Ascending aorta (tissue), 2 donors: ENCODE measurements at regions of chr15 and their contacts with region 1.

Region 1: DNA sequence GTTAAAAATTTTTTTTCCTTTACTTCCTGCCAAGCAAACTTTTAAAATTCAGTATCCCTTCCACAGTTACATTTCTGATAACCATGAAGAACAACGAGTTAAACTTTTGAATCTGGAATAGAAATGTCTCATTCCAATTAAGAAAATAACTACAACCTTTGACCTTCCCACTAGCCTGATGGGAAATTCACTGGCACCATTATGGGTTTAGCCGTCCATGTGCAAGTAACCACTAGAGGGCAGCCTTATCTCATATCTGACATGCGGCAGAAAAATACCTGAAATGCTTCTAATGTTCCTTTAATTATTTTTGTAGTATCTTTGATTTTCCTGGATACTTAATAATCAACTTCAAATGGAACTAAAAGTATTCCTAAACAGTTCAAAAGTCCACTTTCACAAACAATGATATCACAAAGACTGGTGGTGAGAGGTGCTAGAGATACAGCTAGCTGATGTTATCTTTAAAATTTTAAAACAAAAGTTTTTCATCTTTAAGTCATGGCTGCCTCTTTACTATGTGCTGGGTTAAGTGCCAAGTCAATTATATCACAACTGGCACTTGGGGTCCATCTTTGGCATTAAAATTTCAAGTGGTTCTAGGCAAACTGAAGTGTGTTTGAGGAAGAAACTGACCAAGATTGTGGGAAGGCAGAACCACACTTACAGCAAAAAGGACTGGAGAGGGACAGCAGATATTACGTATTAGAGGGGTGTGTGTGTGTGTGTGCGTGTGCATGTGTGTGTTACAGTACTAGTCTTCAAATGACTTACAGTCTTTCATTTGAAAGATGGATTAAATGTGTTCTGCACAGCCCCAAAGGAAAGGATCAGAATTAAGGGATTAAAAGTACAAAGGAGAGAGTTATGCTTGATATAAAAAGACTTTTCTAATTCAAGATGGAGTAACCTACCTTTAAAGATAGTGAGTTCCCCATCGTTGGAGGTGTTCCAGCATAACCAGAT is 107.1 kb upstream of the ICE2 start:
- DNase-seq: peak in 1 of 2 donors; percentile 79
- H3K4me3 ChIP-seq: no peak overlapping the region
- H3K27ac ChIP-seq: no peak overlapping the region
- H3K4me1 ChIP-seq: peaks cover 0 to 5% of the 10 kb centered on the region in 2 donors
- H3K27me3 ChIP-seq: no peaks in the 10 kb centered on the region
- CTCF ChIP-seq: peak; percentile 79 to 88 (median 85)

Region 2: GRCh38 chr15:60916679-60917460 is 330.8 kb after region 1 on chr15:
- intact Hi-C with region 1: loop called (anchors 1 kb)
- DNase-seq: peak; percentile 40 to 91
- H3K4me3 ChIP-seq: peak overlapping the region; percentile 25 to 56
- H3K27ac ChIP-seq: peak overlapping the region; percentile 72 to 87
- H3K4me1 ChIP-seq: peaks cover 0 to 16% of the 10 kb centered on the region in 2 donors
- H3K27me3 ChIP-seq: no peaks in the 10 kb centered on the region
- CTCF ChIP-seq: peak; percentile 76 to 84 (median 78)

Region 3: DNA sequence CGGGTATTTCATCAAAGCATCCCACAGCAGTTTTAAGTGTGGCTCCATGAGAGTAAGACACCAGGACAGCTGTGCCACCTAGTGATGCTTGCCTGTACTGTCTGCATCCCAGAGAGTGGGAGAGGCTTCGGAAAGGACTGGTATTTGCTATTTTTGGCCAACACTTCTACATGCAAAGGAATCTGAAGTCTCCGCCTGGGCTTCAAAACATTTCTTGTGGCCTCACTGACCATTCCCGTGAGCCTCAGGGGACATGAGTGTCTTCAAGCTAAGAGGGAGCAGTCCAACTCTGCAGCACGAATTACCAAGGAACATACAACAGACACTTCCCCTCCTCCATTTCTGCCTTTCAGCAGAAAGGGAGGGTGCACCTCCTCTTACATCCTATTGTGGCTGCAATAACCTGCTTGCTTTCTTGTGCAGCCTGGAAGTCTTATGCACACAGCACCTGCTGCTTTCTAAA is 465.6 kb after region 1 on chr15:
- intact Hi-C with region 1: loop called (anchors 2 kb)
- DNase-seq: no peak
- H3K4me3 ChIP-seq: no peak overlapping the region
- H3K27ac ChIP-seq: no peak overlapping the region
- H3K4me1 ChIP-seq: peaks cover 0 to 6% of the 10 kb centered on the region in 2 donors
- H3K27me3 ChIP-seq: no peaks in the 10 kb centered on the region
- CTCF ChIP-seq: peak; percentile 46 to 66 (median 52)

Region 4: GRCh38 chr15:61834076-61834697 is 1248.2 kb after region 1 on chr15:
- intact Hi-C with region 1: loop called (anchors 2 kb)
- DNase-seq: peak in 1 of 2 donors; percentile 90
- H3K4me3 ChIP-seq: no peak overlapping the region
- H3K27ac ChIP-seq: no peak overlapping the region
- H3K4me1 ChIP-seq: no peaks in the 10 kb centered on the region
- H3K27me3 ChIP-seq: no peaks in the 10 kb centered on the region
- CTCF ChIP-seq: peak; percentile 73 to 98 (median 94)